ENCODE measurements at regions of chr4 and their contacts with region 1.

Region 1: DNA sequence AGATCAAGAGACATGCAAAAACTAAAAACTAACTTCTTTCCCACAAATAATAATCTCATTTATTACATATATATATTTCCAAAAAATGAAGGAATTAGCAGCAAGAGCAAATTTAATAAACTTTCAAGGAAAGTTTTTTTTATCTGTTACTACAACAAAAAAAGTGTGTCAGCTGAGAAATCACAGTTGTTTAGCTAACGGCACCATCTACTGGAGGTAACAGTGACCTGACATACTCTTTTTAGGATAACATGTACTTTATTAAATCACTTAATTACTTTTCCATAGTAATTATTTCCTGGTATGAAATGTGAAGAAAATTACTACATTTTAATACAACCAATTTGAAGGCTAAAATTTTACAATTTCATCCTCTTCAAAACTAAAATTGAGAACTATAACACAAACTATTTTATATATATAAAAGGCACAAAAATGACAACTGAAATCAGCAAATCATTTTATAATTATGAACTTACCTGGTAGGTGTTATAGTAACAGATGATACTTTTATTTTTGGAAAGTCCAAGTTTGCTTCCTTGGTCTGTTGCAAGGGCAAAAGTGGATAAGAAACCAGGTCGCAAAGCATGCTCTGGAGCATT is 9.1 kb downstream of the LAMTOR3 start:
- DNase-seq: peak; percentile 83
- H3K4me3 Mint-ChIP-seq: no peak overlapping the region
- H3K27ac Mint-ChIP-seq: no peak overlapping the region
- H3K4me1 Mint-ChIP-seq: peaks cover 4% of the 10 kb centered on the region
- H3K27me3 Mint-ChIP-seq: no peaks in the 10 kb centered on the region

Region 2: GRCh38 chr4:99723612-99724011 is 161.6 kb before region 1 on chr4:
- intact Hi-C with region 1: loop called (anchors 10 kb)
- DNase-seq: no peak
- H3K4me3 Mint-ChIP-seq: no peak overlapping the region
- H3K27ac Mint-ChIP-seq: no peak overlapping the region
- H3K4me1 Mint-ChIP-seq: no peaks in the 10 kb centered on the region
- H3K27me3 Mint-ChIP-seq: peaks cover 10% of the 10 kb centered on the region

Region 3: GRCh38 chr4:99808260-99808857 is 76.8 kb before region 1 on chr4:
- intact Hi-C with region 1: loop called (anchors 1 kb)
- DNase-seq: peak; percentile 92
- H3K4me3 Mint-ChIP-seq: no peak overlapping the region
- H3K27ac Mint-ChIP-seq: no peak overlapping the region
- H3K4me1 Mint-ChIP-seq: peaks cover 16% of the 10 kb centered on the region
- H3K27me3 Mint-ChIP-seq: peaks cover 13% of the 10 kb centered on the region

Region 4: GRCh38 chr4:99868126-99868596 is 17.0 kb before region 1 on chr4:
- intact Hi-C with region 1: no loop called
- DNase-seq: no peak
- H3K4me3 Mint-ChIP-seq: no peak overlapping the region
- H3K27ac Mint-ChIP-seq: peak overlapping the region; percentile 63
- H3K4me1 Mint-ChIP-seq: peaks cover 10% of the 10 kb centered on the region
- H3K27me3 Mint-ChIP-seq: no peaks in the 10 kb centered on the region

Measured in activated CD4-positive, alpha-beta T cell treated with anti-CD3 and anti-CD28 coated beads, Interleukin-2, amount 10 ng/mL, durations not matched to agents 24 days and 14 days (primary cell).